Activated CD4-positive, alpha-beta memory T cell treated with anti-CD3 and anti-CD28 coated beads for 36 hours (primary cell): ENCODE measurements at regions of chr11 and their contacts with region 1.

Region 1: DNA sequence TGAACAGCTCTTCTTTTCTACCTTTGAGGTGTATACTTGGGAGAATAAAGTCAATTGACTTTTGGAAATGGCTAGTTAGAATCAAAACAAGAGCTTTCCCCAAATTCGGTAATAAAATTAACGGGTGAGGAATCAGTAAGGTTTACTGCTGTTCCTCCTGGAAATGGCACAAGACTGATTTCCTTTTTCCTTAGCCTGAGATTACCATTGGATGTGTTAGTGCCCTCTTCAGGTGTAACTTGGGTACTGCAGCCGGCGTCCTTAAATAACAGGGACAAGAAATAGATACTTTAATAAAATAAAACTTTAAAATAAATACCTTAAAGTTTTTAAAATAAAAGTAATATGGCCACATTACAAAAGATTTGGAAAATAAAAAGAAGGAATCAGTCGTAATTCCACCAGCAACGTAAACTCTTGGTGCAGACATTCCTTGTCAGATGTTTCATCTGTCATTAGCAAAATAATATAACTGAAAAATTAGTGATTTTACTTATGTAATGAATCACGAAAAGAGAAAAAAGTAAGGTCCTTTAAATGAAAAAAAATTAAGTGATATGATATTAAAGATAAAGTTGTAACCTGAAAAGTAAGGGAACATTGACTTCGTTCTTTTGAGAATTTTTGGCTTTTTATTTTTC is 29.7 kb downstream of the ZFTA start:
- DNase-seq: peak; percentile 73
- H3K4me3 Mint-ChIP-seq: no peak overlapping the region
- H3K27ac Mint-ChIP-seq: no peak overlapping the region
- H3K4me1 Mint-ChIP-seq: peaks cover 2% of the 10 kb centered on the region
- H3K27me3 Mint-ChIP-seq: no peaks in the 10 kb centered on the region

Region 2: DNA sequence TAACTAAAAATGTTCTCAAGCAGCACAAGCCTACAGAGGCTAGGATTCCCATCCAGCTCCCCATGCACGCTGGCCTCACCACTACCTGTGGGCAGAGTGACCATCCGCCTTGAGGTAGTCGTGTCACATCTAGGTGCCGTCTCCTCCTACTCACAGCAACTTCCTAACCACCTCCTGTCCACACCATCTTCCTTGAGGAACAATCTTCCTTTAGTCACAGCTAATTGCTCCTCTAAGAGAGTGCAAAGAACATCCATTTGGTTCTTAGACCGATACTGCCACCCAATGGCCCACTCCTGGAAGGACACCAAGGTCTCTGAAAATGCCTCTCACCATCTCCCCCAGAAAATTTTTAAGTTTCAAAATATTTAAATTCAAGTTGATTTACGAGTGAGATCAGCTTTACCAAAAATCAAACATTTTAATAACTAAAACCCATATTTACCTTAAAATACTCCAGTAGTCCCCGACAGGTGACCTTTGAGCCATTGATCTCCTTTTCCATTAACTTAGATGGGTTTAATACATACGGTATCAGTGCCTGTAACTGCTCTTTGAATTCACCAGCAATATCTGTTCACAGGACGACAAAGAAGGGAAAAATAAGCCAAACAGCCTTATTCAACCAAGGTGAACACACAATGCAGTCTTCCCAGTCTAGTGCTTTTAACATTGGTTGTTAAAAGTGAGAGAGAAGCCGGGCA is 102.9 kb before region 1 on chr11:
- CTCF ChIA-PET with region 1: interaction called, 33 read pairs
- POLR2A ChIA-PET with region 1: no interaction called
- intact Hi-C with region 1: loop called (anchors 2 kb)
- DNase-seq: peak; percentile 73
- H3K4me3 Mint-ChIP-seq: no peak overlapping the region
- H3K27ac Mint-ChIP-seq: no peak overlapping the region
- H3K4me1 Mint-ChIP-seq: peaks cover 17% of the 10 kb centered on the region
- H3K27me3 Mint-ChIP-seq: no peaks in the 10 kb centered on the region

Region 3: DNA sequence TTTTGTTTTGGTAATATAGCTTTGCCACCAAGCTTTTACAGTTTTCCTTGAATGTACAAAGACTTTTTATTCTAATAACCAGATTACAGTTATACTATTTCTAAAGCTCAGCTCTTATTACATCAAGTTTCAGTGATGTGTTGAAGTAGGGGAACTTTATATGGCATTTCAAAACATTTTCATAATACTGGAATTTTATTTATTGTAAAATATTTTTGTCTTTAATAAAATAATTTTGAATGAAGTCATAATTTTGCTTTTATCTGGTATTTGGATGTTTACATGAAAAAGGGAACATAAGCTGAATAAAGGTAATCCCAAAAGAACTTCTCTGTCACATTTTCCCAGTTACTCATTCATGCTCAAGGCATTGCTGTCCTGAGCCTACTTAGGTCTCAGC is 22.8 kb before region 1 on chr11:
- CTCF ChIA-PET with region 1: interaction called, 14 read pairs
- POLR2A ChIA-PET with region 1: no interaction called
- intact Hi-C with region 1: no loop called
- DNase-seq: no peak
- H3K4me3 Mint-ChIP-seq: no peak overlapping the region
- H3K27ac Mint-ChIP-seq: no peak overlapping the region
- H3K4me1 Mint-ChIP-seq: peaks cover 6% of the 10 kb centered on the region
- H3K27me3 Mint-ChIP-seq: no peaks in the 10 kb centered on the region

Region 4: GRCh38 chr11:63749624-63750023 is 10.8 kb after region 1 on chr11:
- CTCF ChIA-PET with region 1: interaction called, 15 read pairs
- POLR2A ChIA-PET with region 1: no interaction called
- intact Hi-C with region 1: no loop called
- DNase-seq: no peak
- H3K4me3 Mint-ChIP-seq: no peak overlapping the region
- H3K27ac Mint-ChIP-seq: no peak overlapping the region
- H3K4me1 Mint-ChIP-seq: peaks cover 2% of the 10 kb centered on the region
- H3K27me3 Mint-ChIP-seq: no peaks in the 10 kb centered on the region